ENCODE measurements at regions of chr4 and their contacts with region 1.

Region 1: DNA sequence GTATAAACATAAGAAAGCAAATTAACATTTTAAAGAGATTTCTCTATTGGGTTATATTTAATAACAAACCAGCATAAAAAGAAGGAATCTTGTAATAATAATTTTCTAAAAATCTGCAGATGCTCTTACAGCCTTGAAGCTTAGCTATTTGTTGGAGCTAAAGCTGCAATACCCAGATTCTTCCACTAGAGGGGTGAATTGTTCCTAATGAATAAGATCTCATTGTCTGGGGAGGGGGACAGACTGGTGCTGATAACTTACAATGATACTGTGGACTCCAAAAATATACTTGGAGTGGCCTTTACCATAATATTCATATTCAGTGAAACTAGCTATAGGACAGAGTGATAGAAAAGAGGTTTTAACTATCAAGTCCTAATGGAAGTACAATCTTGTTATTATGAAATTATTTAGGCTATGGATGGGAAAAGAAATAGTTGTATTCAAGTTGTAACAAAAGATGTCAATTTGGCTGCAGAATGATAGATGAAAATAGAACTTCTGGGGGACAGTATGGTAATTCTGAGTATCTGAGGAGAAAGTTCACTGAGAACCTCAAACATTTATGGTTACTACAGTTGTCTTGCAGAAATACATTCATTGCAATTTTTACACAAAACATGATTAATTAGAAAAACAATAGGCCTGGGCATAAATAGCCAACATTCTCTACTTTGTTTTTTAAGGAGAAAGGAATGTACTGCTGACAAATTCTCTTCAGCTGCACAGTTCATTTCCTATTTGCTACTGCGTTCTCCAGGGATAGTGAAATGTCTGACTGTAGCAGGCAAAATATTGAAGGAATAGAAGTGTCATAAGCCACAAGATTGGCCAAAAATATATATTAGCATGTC is 443.3 kb downstream of the GBA3 start:
- DNase-seq: no peak
- H3K4me3 ChIP-seq: no peak overlapping the region
- H3K27ac ChIP-seq: no peak overlapping the region
- H3K4me1 ChIP-seq: no peaks in the 10 kb centered on the region
- H3K27me3 ChIP-seq: no peaks in the 10 kb centered on the region
- CTCF ChIP-seq: peak in 3 of 4 experiments; percentile 38 to 61 (median 39)
- EP300 ChIP-seq: no peak
- POLR2A ChIP-seq: no peak

Region 2: GRCh38 chr4:22487328-22487727 is 648.7 kb before region 1 on chr4:
- intact Hi-C with region 1: no loop called
- DNase-seq: no peak
- H3K4me3 ChIP-seq: no peak overlapping the region
- H3K27ac ChIP-seq: no peak overlapping the region
- H3K4me1 ChIP-seq: peaks cover 0 to 88% (median 52%) of the 10 kb centered on the region in 4 donors
- H3K27me3 ChIP-seq: no peaks in the 10 kb centered on the region
- CTCF ChIP-seq: no peak
- EP300 ChIP-seq: no peak
- POLR2A ChIP-seq: no peak

Region 3: DNA sequence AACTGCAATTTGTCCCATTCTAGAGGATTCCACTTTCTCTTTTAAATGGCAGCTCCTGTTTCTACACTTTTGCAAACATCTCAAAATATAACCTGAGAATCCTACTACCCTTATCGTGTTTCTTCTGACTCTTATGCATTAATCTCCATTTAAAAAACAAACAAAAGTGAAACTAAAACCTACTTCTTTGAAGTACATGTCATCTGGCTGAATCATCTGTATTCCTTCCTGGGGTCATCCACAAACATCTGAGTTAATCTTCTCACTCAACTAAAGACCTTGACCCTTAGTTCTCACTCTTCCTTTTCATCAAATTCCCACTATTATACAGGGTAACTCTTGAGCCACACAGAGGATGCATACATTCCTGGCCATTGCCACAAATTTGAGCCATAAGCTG is 169.0 kb after region 1 on chr4:
- intact Hi-C with region 1: no loop called
- DNase-seq: no peak
- H3K4me3 ChIP-seq: no peak overlapping the region
- H3K27ac ChIP-seq: no peak overlapping the region
- H3K4me1 ChIP-seq: no peaks in the 10 kb centered on the region
- H3K27me3 ChIP-seq: no peaks in the 10 kb centered on the region
- CTCF ChIP-seq: no peak
- EP300 ChIP-seq: no peak
- POLR2A ChIP-seq: no peak

Region 4: GRCh38 chr4:24419181-24420034 is 1283.4 kb after region 1 on chr4:
- intact Hi-C with region 1: loop called (anchors 5 kb)
- DNase-seq: peak; percentile 77
- H3K4me3 ChIP-seq: no peak overlapping the region
- H3K27ac ChIP-seq: no peak overlapping the region
- H3K4me1 ChIP-seq: no peaks in the 10 kb centered on the region
- H3K27me3 ChIP-seq: no peaks in the 10 kb centered on the region
- CTCF ChIP-seq: peak; percentile 61 to 91 (median 85)
- EP300 ChIP-seq: no peak
- POLR2A ChIP-seq: no peak

Measured in sigmoid colon (tissue), 7 donors.